Dorsolateral prefrontal cortex (tissue), 120 donors: ENCODE measurements at regions of chr5 and their contacts with region 1.

Region 1: GRCh38 chr5:110738812-110739651 is at the start of gene SLC25A46:
- DNase-seq: peak; percentile 77 to 91 (median 86)
- H3K4me3 ChIP-seq: peak within 1 kb of the TSS; percentile 70 to 100 (median 95)
- H3K27ac ChIP-seq: peak within 1 kb of the TSS; percentile 24 to 94 (median 85)
- H3K27me3 ChIP-seq: no peaks in the 10 kb centered on the region
- CTCF ChIP-seq: peak in 18 of 56 donors; percentile 6 to 47 (median 22)
- total RNA-seq, gene SLC25A46: 35.6 to 89.0 (median 71.8) TPM

Region 2: GRCh38 chr5:111092062-111092853 is 353.2 kb after region 1 on chr5 and contains the start of gene WDR36:
- intact Hi-C with region 1: loop called in 1 of 2 experiments (anchors 5 kb)
- DNase-seq: peak; percentile 83 to 96 (median 90)
- H3K4me3 ChIP-seq: peak within 1 kb of the TSS; percentile 59 to 100 (median 89)
- H3K27ac ChIP-seq: peak within 1 kb of the TSS in 45 of 59 donors; percentile 1 to 89 (median 63)
- H3K27me3 ChIP-seq: peaks cover 0 to 5% (median 0%) of the 10 kb centered on the region in 45 donors
- CTCF ChIP-seq: peak in 42 of 56 donors; percentile 6 to 58 (median 36)
- total RNA-seq, gene WDR36: 11.7 to 32.8 (median 20.7) TPM